ENCODE measurements at regions of chr1 and their contacts with region 1.

Region 1: DNA sequence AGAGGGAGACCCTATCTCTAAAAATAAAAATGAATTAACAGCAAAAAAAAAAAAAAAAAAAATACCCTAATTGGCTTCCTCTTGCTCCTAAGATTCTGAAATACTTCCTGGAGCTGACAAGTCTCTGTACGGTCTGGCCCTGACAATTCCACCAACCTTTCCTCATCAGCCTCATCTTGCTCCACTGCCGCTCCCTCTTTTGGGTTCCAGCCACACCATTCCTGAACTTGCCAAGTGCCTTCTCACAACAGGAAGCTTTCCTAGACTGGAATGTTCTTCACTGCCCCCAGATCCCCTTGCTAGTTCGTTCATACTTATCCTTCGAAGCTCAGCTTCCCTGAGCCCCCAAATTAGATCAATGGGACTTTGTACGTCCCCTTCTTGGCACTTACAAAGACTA is 37.0 kb downstream of the AKNAD1 start:
- DNase-seq: no peak
- H3K4me3 ChIP-seq: no peak overlapping the region
- H3K27ac ChIP-seq: no peak overlapping the region
- H3K4me1 ChIP-seq: no peaks in the 10 kb centered on the region
- CTCF ChIP-seq: no peak

Region 2: GRCh38 chr1:108785264-108785663 is 34.6 kb before region 1 on chr1:
- CTCF ChIA-PET with region 1: no interaction called
- POLR2A ChIA-PET with region 1: no interaction called
- intact Hi-C with region 1: no loop called
- DNase-seq: peak; percentile 2
- H3K4me3 ChIP-seq: no peak overlapping the region
- H3K27ac ChIP-seq: no peak overlapping the region
- H3K4me1 ChIP-seq: no peaks in the 10 kb centered on the region
- CTCF ChIP-seq: no peak

Region 3: GRCh38 chr1:109170035-109170764 is 350.3 kb after region 1 on chr1:
- CTCF ChIA-PET with region 1: no interaction called
- POLR2A ChIA-PET with region 1: no interaction called
- intact Hi-C with region 1: loop called (anchors 5 kb)
- DNase-seq: no peak
- H3K4me3 ChIP-seq: no peak overlapping the region
- H3K27ac ChIP-seq: no peak overlapping the region
- H3K4me1 ChIP-seq: no peaks in the 10 kb centered on the region
- CTCF ChIP-seq: no peak

Measured in OCI-LY7 (cell line).